GM10248 (cell line): ENCODE measurements at regions of chr12 and their contacts with region 1.

Region 1: GRCh38 chr12:56468216-56469006 is at the start of gene SPRYD4:
- DNase-seq: peak; percentile 96
- CTCF ChIP-seq: peak; percentile 63

Region 2: DNA sequence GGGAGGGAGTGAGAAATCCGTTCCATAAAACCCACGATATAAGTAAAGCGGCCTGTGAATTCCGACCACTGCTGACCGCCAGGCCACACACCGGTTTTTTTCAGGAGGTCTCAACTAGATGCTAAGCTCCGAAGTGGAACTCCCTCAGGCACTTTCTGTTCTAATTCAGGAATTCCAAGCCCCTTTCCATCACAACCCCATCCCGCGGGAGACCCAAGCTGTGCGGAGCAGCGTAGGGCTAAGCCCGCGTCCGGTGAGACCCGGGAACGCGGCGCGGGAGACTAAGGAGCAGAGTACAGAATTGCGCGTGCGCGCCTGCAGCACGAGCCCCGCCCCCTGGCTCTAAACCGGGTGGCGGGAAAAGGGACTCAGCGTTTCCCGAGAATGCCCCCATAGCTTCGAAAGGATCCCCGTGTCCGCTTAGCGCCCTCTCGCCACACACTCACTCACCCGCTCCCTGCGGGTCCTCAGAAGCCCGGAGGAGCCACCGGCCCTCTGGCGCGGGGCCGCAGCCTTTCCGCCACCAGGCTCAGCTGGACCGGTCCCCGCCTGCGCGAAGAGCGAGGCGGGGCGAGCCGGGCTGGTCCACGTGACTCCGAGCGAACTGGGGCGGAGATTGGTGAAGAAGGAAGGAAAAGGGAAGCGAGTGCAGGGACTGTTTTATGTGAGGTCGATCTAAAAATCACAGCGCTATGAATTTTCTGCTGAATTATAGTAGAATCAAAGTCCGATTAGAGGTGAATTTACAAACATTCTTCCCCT is 19.4 kb before region 1 on chr12 and contains the start of gene TIMELESS:
- CTCF ChIA-PET with region 1: interaction called, 34 read pairs
- POLR2A ChIA-PET with region 1: interaction called, 3 read pairs
- DNase-seq: peak; percentile 96
- CTCF ChIP-seq: no peak

Region 3: DNA sequence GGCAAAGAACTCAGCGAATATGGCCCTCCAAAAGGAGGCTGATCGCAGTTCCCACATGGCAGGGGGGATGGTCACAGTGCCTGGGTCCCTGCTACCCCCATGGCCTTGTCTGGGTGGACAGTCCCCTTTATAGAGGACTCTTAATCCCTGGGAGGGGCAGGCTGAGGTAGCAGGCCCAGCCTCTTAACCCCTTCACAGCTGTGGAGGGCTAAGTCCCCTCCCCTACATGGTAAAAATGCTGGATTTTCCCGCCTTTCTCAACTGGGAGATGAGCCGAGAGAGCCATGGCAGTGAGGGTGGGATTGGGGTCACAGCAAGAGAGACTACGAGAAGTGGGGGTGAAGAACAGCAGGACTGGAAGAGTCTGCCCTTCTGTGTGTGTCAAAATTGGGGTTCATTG is 13.9 kb before region 1 on chr12 and contains the start of gene MIP:
- CTCF ChIA-PET with region 1: interaction called, 34 read pairs
- POLR2A ChIA-PET with region 1: interaction called, 3 read pairs
- DNase-seq: no peak
- CTCF ChIP-seq: no peak